Caco-2 (cell line): ENCODE measurements at regions of chr17 and their contacts with region 1.

Region 1: DNA sequence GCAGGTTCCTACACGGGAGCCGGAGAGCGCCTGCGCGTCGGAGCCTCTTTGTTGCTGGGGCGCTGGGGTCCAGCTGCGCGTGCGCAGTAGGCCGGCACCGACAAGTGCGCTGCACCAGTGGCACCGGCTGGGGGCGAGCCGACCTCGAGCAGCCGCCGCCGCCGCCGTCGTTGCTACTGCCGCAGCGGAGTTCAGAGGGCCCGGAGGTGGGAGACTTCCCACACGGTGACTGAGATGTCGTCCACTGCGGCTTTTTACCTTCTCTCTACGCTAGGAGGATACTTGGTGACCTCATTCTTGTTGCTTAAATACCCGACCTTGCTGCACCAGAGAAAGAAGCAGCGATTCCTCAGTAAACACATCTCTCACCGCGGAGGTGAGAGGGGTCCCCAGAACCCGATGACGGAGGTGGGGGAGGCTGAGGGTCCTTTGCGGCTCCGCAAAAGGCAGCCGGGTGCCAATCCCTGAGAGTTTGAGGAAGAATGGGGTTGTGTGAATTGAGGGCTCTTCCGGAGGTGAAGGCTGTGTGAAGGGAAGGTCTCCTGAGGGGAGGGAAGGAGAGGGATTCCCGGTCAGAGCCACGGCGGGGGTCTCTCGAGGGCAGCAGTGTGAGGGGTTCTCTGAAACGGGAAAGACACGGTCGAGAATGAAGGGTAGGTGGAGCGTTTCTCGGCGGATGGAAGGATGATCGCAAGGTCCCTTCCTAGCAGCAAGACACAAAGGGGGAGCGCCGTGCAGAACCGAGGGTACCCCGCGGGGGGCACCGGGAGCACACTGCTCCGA is at the start of gene GDPD1:
- DNase-seq: peak; percentile 95 to 99
- H3K4me3 ChIP-seq: peak within 1 kb of the TSS; percentile 51
- H3K4me3 Mint-ChIP-seq: peak within 1 kb of the TSS; percentile 95
- H3K27ac Mint-ChIP-seq: peak within 1 kb of the TSS; percentile 88
- H3K4me1 ChIP-seq: no peaks in the 10 kb centered on the region
- H3K4me1 Mint-ChIP-seq: no peaks in the 10 kb centered on the region
- H3K27me3 ChIP-seq: no peaks in the 10 kb centered on the region
- H3K27me3 Mint-ChIP-seq: no peaks in the 10 kb centered on the region
- CTCF ChIP-seq: peak; percentile 53 to 54
- total RNA-seq, gene GDPD1: 1.2 and 2.9 TPM in 2 replicates

Region 2: DNA sequence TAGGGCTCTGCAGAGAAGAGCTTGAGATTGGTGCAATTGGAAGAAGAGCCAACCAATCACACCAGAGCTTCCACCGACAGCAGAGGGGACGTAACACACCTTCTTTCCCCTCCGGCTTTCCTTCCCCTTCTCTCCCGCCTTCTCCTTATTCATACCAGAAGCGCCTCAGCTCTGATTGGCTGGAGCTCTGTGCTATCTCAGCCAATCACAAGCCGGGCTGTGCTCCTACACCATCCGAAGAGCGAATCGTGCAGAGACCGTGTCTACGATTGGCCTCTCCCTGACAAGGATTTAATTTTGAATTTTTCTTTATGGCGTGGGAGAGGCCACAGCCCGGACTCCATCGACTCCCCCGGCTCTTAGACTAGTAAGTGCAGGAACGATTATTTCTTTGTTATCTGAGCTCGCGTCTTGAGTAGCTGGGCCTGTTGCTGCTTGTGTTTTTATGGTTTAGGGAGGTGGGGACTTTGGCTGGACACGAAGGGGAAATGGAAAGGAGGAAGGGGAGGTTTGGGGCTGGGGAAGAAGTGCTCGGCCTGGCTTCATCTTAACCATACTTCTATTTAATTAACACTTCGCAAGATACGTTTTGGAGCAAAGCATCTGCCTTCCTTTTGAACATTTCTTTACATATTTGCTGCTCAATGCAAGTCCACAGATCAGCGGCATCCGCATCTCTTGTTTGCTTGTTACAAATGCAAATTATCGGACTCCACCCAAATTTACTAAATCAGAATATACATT is 65.0 kb before region 1 on chr17 and contains the start of gene PRR11:
- CTCF ChIA-PET with region 1: interaction called, 3 read pairs
- POLR2A ChIA-PET with region 1: interaction called, 21 read pairs
- intact Hi-C with region 1: no loop called
- DNase-seq: peak; percentile 96 to 100
- H3K4me3 ChIP-seq: peak within 1 kb of the TSS; percentile 82
- H3K4me3 Mint-ChIP-seq: no peak within 1 kb of the TSS
- H3K27ac Mint-ChIP-seq: no peak within 1 kb of the TSS
- H3K4me1 ChIP-seq: peaks cover 20% of the 10 kb centered on the region
- H3K4me1 Mint-ChIP-seq: peaks cover 31% of the 10 kb centered on the region
- H3K27me3 ChIP-seq: no peaks in the 10 kb centered on the region
- H3K27me3 Mint-ChIP-seq: no peaks in the 10 kb centered on the region
- CTCF ChIP-seq: no peak
- total RNA-seq, gene PRR11: 80.2 and 89.9 TPM in 2 replicates

Region 3: DNA sequence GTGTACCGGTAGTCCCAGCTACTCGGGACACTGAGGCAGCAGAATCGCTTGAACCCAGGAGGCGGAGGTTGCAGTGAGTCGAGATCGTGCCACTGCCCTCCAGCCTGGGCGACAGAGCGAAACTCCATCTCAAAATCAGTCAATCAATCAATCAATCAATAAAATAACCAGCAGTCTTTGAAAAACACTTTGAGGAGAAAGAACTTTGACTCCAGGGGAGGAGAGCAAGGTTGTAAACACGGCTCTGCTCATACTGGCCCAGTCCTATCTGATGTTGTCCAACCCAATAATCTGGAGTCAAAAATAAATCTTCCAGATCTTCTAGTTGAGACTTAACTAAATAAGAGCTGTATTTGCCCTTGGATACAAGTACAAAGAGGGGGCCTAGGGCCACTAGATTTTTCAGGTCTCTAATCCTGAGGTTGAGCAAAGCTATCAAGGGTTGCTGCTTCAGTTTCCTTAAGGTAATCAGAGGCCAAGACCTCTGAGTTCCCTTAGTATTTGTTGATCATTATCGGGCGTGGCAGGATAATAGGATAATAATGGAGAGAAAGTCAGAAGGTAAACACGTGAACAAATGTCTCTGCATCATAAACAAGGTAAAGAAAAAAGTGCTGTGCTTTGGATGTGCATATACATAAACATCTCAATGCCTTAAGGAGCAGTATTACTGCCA is 69.2 kb after region 1 on chr17:
- CTCF ChIA-PET with region 1: no interaction called
- POLR2A ChIA-PET with region 1: no interaction called
- intact Hi-C with region 1: loop called (anchors 2 kb)
- DNase-seq: peak; percentile 77 to 80
- H3K4me3 ChIP-seq: no peak overlapping the region
- H3K4me3 Mint-ChIP-seq: peak overlapping the region; percentile 50
- H3K27ac Mint-ChIP-seq: peak overlapping the region; percentile 55
- H3K4me1 ChIP-seq: peaks cover 19% of the 10 kb centered on the region
- H3K4me1 Mint-ChIP-seq: peaks cover 7% of the 10 kb centered on the region
- H3K27me3 ChIP-seq: no peaks in the 10 kb centered on the region
- H3K27me3 Mint-ChIP-seq: no peaks in the 10 kb centered on the region
- CTCF ChIP-seq: no peak